Aorta (tissue), 5 donors: ENCODE measurements at regions of chr19 and their contacts with region 1.

Region 1: DNA sequence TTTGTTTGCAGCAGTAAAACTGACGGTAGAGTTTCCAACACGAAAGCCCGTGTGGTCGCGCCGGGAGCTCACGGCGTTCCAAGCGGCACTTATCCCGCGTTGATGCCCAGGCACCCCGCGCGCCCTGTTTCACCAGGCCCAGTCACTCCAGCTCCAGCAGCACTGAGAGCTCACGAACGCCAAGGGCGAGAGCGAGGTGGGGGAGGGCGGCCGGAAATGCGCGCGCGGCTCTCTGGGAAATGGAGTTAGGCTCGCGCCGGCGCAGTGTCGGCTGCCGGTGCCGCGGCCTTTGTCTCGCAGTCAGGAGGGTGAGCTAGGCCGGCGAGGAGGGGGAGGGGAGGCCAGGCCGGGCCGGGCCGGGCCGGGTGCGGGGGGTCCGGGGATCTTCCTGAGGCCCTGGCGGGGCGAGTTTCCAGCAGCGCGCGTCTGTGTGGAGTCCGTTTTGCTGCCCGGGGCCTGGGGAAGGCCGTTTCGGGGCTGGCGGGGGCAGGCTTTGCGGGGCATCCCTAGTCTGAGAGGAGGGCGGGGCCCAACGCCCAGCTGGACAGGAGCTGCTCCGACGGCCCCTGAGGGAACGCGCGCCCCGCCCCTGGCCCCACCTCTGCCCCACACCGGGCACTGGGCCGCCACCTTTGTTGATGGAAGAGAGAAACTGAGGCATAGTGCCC is at the start of gene ZNF135:
- DNase-seq: peak; percentile 92 to 96
- ATAC-seq: peak; percentile 96
- H3K4me3 ChIP-seq: peak within 1 kb of the TSS; percentile 61 to 74
- H3K27ac ChIP-seq: peak within 1 kb of the TSS; percentile 23 to 62
- H3K4me1 ChIP-seq: no peaks in the 10 kb centered on the region
- H3K27me3 ChIP-seq: no peaks in the 10 kb centered on the region
- total RNA-seq, gene ZNF135: 3.4 to 6.6 TPM

Region 2: GRCh38 chr19:58097781-58098681 is 38.9 kb after region 1 on chr19 and contains the start of gene ZSCAN18:
- intact Hi-C with region 1: loop called in 1 of 2 experiments (anchors 5 kb)
- DNase-seq: peak; percentile 99 to 100
- ATAC-seq: peak; percentile 99
- H3K4me3 ChIP-seq: peak within 1 kb of the TSS; percentile 75 to 88
- H3K27ac ChIP-seq: peak within 1 kb of the TSS; percentile 90 to 96
- H3K4me1 ChIP-seq: peaks cover 0 to 1% of the 10 kb centered on the region in 2 donors
- H3K27me3 ChIP-seq: no peaks in the 10 kb centered on the region
- total RNA-seq, gene ZSCAN18: 58.6 to 62.7 TPM